K562 (cell line): ENCODE measurements at regions of chrX and their contacts with region 1.

Region 1: GRCh38 chrX:107776649-107777535 is 641 bp upstream of the NCBP2L start:
- DNase-seq: peak; percentile 72 to 84 (median 73)
- ATAC-seq: peak; percentile 87
- H3K4me3 ChIP-seq: peak overlapping the region; percentile 34; the same call in 1 of the 2 replicates
- H3K27ac ChIP-seq: no peak overlapping the region
- H3K4me1 ChIP-seq: peaks cover 4 to 18% of the 10 kb centered on the region in 2 experiments; a peak in 4 of 5 replicates
- H3K27me3 ChIP-seq: peaks cover 0 to 20% of the 10 kb centered on the region in 2 experiments; a peak in 3 of 5 replicates
- CTCF ChIP-seq: peak; percentile 77 to 86 (median 84)
- EP300 ChIP-seq: no peak
- POLR2A ChIP-seq: no peak
- RAD21 ChIP-seq: peak; percentile 83 to 86

Region 2: GRCh38 chrX:107537815-107538214 is 239.1 kb before region 1 on chrX:
- CTCF ChIA-PET with region 1: no interaction called
- POLR2A ChIA-PET with region 1: no interaction called
- in situ Hi-C with region 1: loop called (anchors 10 kb)
- intact Hi-C with region 1: loop called (anchors 2 kb)
- DNase-seq: peak; percentile 38 to 63 (median 42)
- ATAC-seq: peak; percentile 94
- H3K4me3 ChIP-seq: no peak overlapping the region
- H3K27ac ChIP-seq: no peak overlapping the region
- H3K4me1 ChIP-seq: no peaks in the 10 kb centered on the region
- H3K27me3 ChIP-seq: no peaks in the 10 kb centered on the region
- CTCF ChIP-seq: peak; percentile 56 to 66 (median 64)
- EP300 ChIP-seq: no peak
- POLR2A ChIP-seq: no peak
- RAD21 ChIP-seq: peak; percentile 29 to 70; a peak in 3 of 4 replicates

Region 3: DNA sequence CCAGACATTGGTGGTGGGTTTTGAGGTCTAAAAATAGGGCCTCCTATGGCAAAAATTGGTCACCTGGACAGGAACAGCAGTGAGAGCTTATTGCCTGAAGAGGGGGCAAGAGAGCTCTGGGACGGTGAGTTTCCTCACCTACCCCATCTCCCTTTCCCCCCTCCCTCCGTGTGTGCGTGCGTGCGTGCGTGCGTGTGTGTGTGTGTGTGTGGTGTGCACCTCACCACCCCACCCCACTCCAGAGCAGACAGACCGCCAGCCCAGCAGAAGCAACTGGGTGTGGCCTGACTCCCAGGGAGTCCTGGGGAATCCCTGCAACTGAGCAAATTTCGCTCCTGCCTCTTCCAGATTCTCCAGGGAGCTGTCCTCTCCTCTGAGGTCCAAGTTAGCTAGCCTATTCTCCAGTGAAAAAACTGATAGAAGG is 103.9 kb before region 1 on chrX:
- CTCF ChIA-PET with region 1: interaction called, 15 read pairs
- POLR2A ChIA-PET with region 1: interaction called, 4 read pairs
- in situ Hi-C with region 1: loop called (anchors 5 kb)
- intact Hi-C with region 1: loop called (anchors 1 kb)
- DNase-seq: peak; percentile 61 to 80 (median 72)
- ATAC-seq: peak; percentile 62
- H3K4me3 ChIP-seq: no peak overlapping the region
- H3K27ac ChIP-seq: no peak overlapping the region
- H3K4me1 ChIP-seq: peaks cover 21 to 34% of the 10 kb centered on the region in 2 experiments; a peak in 4 of 5 replicates
- H3K27me3 ChIP-seq: no peaks in the 10 kb centered on the region
- CTCF ChIP-seq: peak; percentile 76 to 84 (median 76)
- EP300 ChIP-seq: 0 out of 2 replicates have a peak, but pooled peaks have one; percentile 5
- POLR2A ChIP-seq: no peak
- RAD21 ChIP-seq: peak; percentile 59 to 84

Region 4: GRCh38 chrX:107731831-107732502 is 44.9 kb before region 1 on chrX:
- CTCF ChIA-PET with region 1: no interaction called
- POLR2A ChIA-PET with region 1: no interaction called
- in situ Hi-C with region 1: no loop called
- intact Hi-C with region 1: loop called (anchors 2 kb)
- DNase-seq: peak; percentile 70 to 85 (median 72)
- ATAC-seq: peak; percentile 75
- H3K4me3 ChIP-seq: no peak overlapping the region
- H3K27ac ChIP-seq: no peak overlapping the region; the same call in 2 of the 3 replicates
- H3K4me1 ChIP-seq: peaks cover 15 to 41% of the 10 kb centered on the region in 2 experiments; a peak in 4 of 5 replicates
- H3K27me3 ChIP-seq: no peaks in the 10 kb centered on the region
- CTCF ChIP-seq: no peak
- EP300 ChIP-seq: 0 out of 2 replicates have a peak, but pooled peaks have one; percentile 19
- POLR2A ChIP-seq: no peak
- RAD21 ChIP-seq: no peak

Region 5: DNA sequence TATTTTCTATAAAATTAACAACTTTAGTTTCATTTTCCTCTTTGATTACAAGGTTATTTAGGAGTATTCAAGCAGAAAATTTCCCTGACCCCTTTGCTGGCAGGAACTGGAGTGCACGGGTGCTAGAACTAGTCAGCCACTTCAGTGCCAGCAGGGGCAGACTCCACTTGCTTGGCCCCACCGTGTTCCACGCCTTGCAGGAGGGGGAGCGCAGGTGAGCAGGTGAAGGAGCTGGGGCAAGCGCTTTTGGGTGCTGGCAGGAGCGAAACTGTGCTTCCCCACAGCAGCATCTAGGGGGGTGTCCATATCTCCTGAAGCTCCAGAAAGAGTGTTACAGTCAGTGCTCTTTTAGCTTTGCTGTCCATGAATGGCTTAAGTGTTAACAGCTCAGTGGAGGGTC is 94.2 kb after region 1 on chrX:
- CTCF ChIA-PET with region 1: no interaction called
- POLR2A ChIA-PET with region 1: no interaction called
- in situ Hi-C with region 1: no loop called
- intact Hi-C with region 1: no loop called
- DNase-seq: no peak
- ATAC-seq: no peak
- H3K4me3 ChIP-seq: no peak overlapping the region
- H3K27ac ChIP-seq: no peak overlapping the region
- H3K4me1 ChIP-seq: no peaks in the 10 kb centered on the region
- H3K27me3 ChIP-seq: no peaks in the 10 kb centered on the region
- CTCF ChIP-seq: no peak
- EP300 ChIP-seq: no peak
- POLR2A ChIP-seq: no peak
- RAD21 ChIP-seq: no peak

Region 6: DNA sequence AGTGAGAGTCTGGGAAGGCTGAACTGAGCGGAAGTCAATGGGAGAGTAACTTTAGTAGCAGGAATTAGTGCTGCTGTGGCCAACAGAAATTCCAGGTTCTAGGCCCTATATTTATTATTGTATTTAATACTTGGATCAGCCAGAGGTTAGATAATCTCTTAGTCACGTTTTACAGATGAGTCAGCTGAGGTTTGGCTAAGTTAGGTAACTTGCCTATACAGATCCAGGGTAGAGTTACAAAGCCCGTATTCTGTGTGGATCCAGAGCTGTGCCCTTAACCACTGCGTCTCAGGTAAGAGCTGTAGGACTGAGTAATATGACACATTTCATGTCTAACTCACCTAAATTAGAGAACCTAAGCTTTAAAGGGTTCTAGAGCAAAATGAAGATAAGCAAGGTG is 294.0 kb after region 1 on chrX:
- CTCF ChIA-PET with region 1: no interaction called
- POLR2A ChIA-PET with region 1: no interaction called
- in situ Hi-C with region 1: no loop called
- intact Hi-C with region 1: loop called (anchors 5 kb)
- DNase-seq: no peak
- ATAC-seq: no peak
- H3K4me3 ChIP-seq: no peak overlapping the region
- H3K27ac ChIP-seq: no peak overlapping the region
- H3K4me1 ChIP-seq: no peaks in the 10 kb centered on the region
- H3K27me3 ChIP-seq: no peaks in the 10 kb centered on the region
- CTCF ChIP-seq: no peak
- EP300 ChIP-seq: no peak
- POLR2A ChIP-seq: no peak
- RAD21 ChIP-seq: no peak